ENCODE measurements at regions of chr1 and their contacts with region 1.

Region 1: DNA sequence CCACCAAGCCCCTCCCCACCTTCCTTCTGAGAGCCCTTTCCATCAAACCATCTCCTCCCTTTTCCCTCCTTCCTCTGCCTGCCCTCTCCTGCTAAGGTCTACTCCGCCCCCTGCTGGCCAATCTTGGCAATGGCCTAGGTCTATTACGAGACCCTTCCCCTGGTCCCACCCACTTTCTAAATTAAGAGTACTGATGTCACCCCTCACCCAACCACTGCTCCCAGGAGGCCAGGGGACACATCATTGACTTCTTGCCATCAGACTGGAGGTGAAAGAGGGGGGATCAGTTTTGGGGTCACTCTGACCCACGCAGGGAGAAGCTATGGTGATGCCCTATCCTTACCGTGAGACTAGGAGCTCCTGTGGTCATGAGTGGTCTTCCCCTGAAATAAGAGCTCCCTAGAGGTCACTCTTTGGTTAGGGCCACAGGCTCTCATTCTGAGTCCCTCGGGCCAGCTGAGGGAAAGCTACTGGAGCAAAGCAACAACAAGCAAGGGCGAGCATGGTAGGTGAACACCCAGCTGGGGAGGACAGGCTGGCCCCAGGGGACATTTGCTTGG is 34.6 kb upstream of the S100A7 start:
- DNase-seq: peak; percentile 82 to 100
- H3K4me3 ChIP-seq: no peak overlapping the region
- H3K27ac ChIP-seq: 0 out of 2 replicates have a peak overlapping the region, but pooled peaks have one; percentile 38
- H3K4me1 ChIP-seq: peaks cover 0 to 6% (median 2%) of the 10 kb centered on the region in 4 experiments; a peak in 4 of 7 replicates
- H3K27me3 ChIP-seq: no peaks in the 10 kb centered on the region
- CTCF ChIP-seq: peak; percentile 80 to 94 (median 92)
- EP300 ChIP-seq: peak in 1 of 2 experiments; percentile 66; a peak in 2 of 3 replicates
- POLR2A ChIP-seq: no peak
- RAD21 ChIP-seq: peak; percentile 88 to 97

Region 2: DNA sequence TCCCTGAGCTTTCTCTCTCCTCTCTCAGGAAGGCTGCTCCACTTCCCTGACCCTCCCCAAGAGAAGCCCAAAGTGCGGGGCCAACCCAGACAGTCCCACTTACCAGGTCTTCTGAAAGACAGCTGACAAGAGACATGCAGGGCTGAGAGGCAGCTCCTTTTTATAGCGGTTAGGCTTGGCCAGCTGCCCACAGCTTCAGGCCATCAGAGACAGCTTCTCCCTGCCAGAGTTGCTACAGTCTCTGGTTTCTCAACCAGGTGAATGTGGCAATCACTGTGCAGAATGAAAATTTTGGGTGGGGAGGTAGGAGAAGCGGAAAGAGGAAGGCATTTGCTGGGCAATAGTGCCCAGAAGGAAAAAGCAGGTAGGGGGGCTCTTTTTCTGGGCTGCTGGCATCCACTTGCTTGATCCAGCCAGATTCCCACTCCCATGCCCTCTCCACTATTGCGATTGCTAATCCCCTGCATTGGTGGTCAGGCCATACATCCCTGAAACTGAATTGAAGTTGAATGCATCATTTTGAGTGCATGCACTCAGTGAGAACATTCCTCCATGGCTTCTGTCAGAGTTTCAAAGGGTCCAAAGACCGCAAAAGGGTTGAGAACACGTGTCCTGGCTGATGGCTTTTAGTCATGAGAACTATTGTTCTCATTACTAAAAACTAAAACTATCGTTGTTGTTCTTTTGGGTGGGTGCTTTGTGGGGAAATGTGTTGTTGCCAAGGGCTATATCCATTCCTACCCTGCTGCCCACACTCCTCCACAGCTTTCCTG is 103.9 kb before region 1 on chr1 and contains the start of gene S100A8:
- CTCF ChIA-PET with region 1: interaction called, 33 read pairs
- POLR2A ChIA-PET with region 1: no interaction called
- DNase-seq: no peak
- H3K4me3 ChIP-seq: no peak within 1 kb of the TSS
- H3K27ac ChIP-seq: no peak within 1 kb of the TSS
- H3K4me1 ChIP-seq: no peaks in the 10 kb centered on the region
- H3K27me3 ChIP-seq: peaks cover 0 to 2% (median 0%) of the 10 kb centered on the region in 4 experiments; a peak in 1 of 7 replicates
- CTCF ChIP-seq: no peak
- EP300 ChIP-seq: no peak
- POLR2A ChIP-seq: no peak
- RAD21 ChIP-seq: no peak
- total RNA-seq, gene S100A8: not detected in 2 replicates

Region 3: DNA sequence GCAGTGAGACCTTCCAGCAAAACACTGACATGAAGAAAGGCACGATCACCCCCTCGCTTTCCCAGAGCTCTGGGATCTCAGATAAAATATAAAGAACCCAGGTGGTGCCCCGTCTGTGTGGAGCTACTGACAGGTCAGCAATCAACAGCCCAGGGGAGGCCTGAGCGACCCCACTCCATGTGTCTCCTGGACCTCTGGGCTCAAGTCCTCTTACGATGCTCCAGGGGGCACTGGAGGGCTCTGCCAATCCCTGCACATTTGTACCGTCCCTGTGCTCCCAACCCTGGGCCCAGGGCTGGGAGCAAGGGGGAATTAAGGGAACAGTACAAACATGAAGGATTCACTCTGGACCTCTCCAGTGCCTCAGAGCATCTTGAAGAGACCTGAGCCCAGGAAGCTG is 66.3 kb before region 1 on chr1:
- CTCF ChIA-PET with region 1: interaction called, 19 read pairs
- POLR2A ChIA-PET with region 1: no interaction called
- DNase-seq: peak in 1 of 2 experiments; percentile 46
- H3K4me3 ChIP-seq: no peak overlapping the region
- H3K27ac ChIP-seq: no peak overlapping the region
- H3K4me1 ChIP-seq: no peaks in the 10 kb centered on the region; a peak in 2 of 7 replicates
- H3K27me3 ChIP-seq: no peaks in the 10 kb centered on the region
- CTCF ChIP-seq: peak; percentile 43 to 63 (median 45)
- EP300 ChIP-seq: no peak
- POLR2A ChIP-seq: no peak
- RAD21 ChIP-seq: peak; percentile 37 to 57; a peak in 3 of 4 replicates

Region 4: GRCh38 chr1:153465811-153466636 is 29.0 kb before region 1 on chr1:
- CTCF ChIA-PET with region 1: interaction called, 53 read pairs
- POLR2A ChIA-PET with region 1: interaction called, 14 read pairs
- DNase-seq: peak; percentile 43 to 92
- H3K4me3 ChIP-seq: peak overlapping the region in 1 of 4 experiments; percentile 35; a peak in 1 of 8 replicates
- H3K27ac ChIP-seq: 0 out of 2 replicates have a peak overlapping the region, but pooled peaks have one; percentile 33
- H3K4me1 ChIP-seq: peaks cover 4 to 8% (median 5%) of the 10 kb centered on the region in 4 experiments; a peak in 5 of 7 replicates
- H3K27me3 ChIP-seq: no peaks in the 10 kb centered on the region; a peak in 1 of 7 replicates
- CTCF ChIP-seq: peak; percentile 78 to 89 (median 83)
- EP300 ChIP-seq: no peak
- POLR2A ChIP-seq: peak in 1 of 2 experiments; percentile 43; a peak in 1 of 3 replicates
- RAD21 ChIP-seq: peak; percentile 61 to 67

Region 5: GRCh38 chr1:153510984-153511410 is 15.9 kb after region 1 on chr1:
- CTCF ChIA-PET with region 1: interaction called, 28 read pairs
- POLR2A ChIA-PET with region 1: no interaction called
- DNase-seq: peak in 1 of 2 experiments; percentile 93
- H3K4me3 ChIP-seq: no peak overlapping the region
- H3K27ac ChIP-seq: no peak overlapping the region
- H3K4me1 ChIP-seq: peaks cover 0 to 3% (median 1%) of the 10 kb centered on the region in 4 experiments; a peak in 3 of 7 replicates
- H3K27me3 ChIP-seq: peaks cover 0 to 5% (median 2%) of the 10 kb centered on the region in 4 experiments; a peak in 3 of 7 replicates
- CTCF ChIP-seq: peak; percentile 95 to 97 (median 95)
- EP300 ChIP-seq: no peak
- POLR2A ChIP-seq: no peak
- RAD21 ChIP-seq: peak; percentile 99 to 100

Measured in H1 (cell line).